ENCODE measurements at regions of chr14 and their contacts with region 1.

Region 1: GRCh38 chr14:35285168-35286002 is 6.8 kb upstream of the PSMA6 start:
- DNase-seq: no peak
- ATAC-seq: peak; percentile 32 to 76 (median 62)
- H3K4me3 ChIP-seq: peak overlapping the region in 1 of 10 donors; percentile 14
- H3K27ac ChIP-seq: peak overlapping the region in 5 of 10 donors; percentile 19 to 84 (median 36)
- H3K4me1 ChIP-seq: peaks cover 0 to 44% (median 13%) of the 10 kb centered on the region in 9 donors
- H3K27me3 ChIP-seq: no peaks in the 10 kb centered on the region
- CTCF ChIP-seq: no peak

Region 2: GRCh38 chr14:35229495-35230089 is 55.8 kb before region 1 on chr14:
- intact Hi-C with region 1: loop called in 1 of 10 experiments (anchors 10 kb)
- DNase-seq: no peak
- ATAC-seq: no peak
- H3K4me3 ChIP-seq: no peak overlapping the region
- H3K27ac ChIP-seq: no peak overlapping the region
- H3K4me1 ChIP-seq: peaks cover 0 to 31% (median 4%) of the 10 kb centered on the region in 9 donors
- H3K27me3 ChIP-seq: no peaks in the 10 kb centered on the region
- CTCF ChIP-seq: peak in 8 of 9 donors; percentile 22 to 51 (median 40)